A673 (cell line): ENCODE measurements at regions of chr22 and their contacts with region 1.

Region 1: GRCh38 chr22:46563381-46564083 is 26.1 kb upstream of the CELSR1 start:
- DNase-seq: peak; percentile 77
- H3K4me3 ChIP-seq: no peak overlapping the region
- H3K27ac ChIP-seq: no peak overlapping the region
- H3K4me1 ChIP-seq: peaks cover 4% of the 10 kb centered on the region
- H3K27me3 ChIP-seq: no peaks in the 10 kb centered on the region
- CTCF ChIP-seq: peak; percentile 84

Region 2: DNA sequence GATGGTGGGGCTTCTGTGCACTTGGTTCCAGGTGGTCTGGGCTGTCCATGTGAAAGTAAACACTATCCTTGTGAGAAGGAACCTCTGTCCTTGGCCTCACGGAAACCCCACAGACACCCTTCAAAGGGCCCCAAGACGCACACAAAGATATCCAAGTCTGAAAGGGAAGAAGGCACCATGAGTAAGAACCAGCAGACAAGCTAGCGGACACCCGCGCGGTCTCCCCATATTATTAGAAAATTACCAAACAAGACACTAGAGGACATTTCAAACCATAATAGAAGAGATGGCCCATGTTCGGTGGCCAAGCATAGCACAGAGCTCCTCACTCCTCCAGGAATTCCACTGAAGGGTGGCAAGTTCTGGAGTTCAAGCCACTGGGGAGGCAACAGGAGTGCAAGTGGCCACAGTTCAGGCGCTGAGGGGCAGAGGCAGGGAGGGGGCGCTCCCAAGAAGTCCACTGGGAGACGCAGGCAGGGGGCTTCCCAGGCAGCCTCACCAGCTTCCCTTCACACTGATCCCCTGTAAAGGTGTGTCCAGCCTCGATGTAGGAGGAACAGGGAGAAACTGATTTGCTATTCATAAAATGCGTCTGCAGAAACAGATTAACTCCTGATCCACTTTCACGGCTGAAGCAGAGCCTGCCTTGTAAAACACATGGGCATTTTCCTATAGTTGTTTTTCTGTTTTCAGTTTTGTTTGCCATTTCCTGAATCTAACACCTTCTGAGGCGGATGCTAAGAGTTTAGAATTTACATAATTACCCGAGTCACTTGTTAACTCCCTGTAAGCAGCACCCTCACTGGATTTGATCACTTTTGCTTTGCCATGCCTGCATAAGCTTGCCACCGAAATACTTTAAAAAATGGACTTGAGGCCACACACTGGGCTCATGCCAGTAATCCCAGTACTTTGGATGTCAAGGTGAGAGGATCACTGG is 422.3 kb before region 1 on chr22:
- CTCF ChIA-PET with region 1: interaction called, 10 read pairs
- POLR2A ChIA-PET with region 1: no interaction called
- intact Hi-C with region 1: no loop called
- DNase-seq: no peak
- H3K4me3 ChIP-seq: no peak overlapping the region
- H3K27ac ChIP-seq: no peak overlapping the region
- H3K4me1 ChIP-seq: no peaks in the 10 kb centered on the region
- H3K27me3 ChIP-seq: no peaks in the 10 kb centered on the region
- CTCF ChIP-seq: no peak

Region 3: GRCh38 chr22:46551321-46551720 is 12.2 kb before region 1 on chr22:
- CTCF ChIA-PET with region 1: interaction called, 11 read pairs
- POLR2A ChIA-PET with region 1: no interaction called
- intact Hi-C with region 1: no loop called
- DNase-seq: no peak
- H3K4me3 ChIP-seq: no peak overlapping the region
- H3K27ac ChIP-seq: no peak overlapping the region
- H3K4me1 ChIP-seq: no peaks in the 10 kb centered on the region
- H3K27me3 ChIP-seq: no peaks in the 10 kb centered on the region
- CTCF ChIP-seq: no peak

Region 4: DNA sequence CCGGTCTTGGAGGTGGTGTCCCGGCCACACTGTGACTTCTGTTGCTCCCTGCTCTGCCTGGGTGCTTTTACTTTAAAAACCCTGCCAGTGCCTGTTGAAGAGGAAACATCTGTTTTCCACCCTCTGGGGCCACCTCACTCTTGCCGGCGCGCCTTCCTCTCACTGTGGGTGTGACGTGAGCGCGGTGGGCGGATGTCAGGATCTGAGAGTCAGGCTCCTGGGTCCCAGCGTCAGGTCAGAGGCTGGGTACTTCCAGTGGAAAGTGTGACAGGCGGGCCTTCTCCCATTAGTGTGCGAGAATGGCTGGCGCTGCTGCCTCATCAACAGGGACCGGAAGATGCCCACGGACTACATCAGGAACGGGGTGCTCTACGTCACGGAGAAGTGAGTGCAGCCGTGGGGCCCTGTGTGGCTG is 110.8 kb after region 1 on chr22:
- CTCF ChIA-PET with region 1: interaction called, 8 read pairs
- POLR2A ChIA-PET with region 1: no interaction called
- intact Hi-C with region 1: loop called (anchors 10 kb)
- DNase-seq: no peak
- H3K4me3 ChIP-seq: no peak overlapping the region
- H3K27ac ChIP-seq: no peak overlapping the region
- H3K4me1 ChIP-seq: peaks cover 8% of the 10 kb centered on the region
- H3K27me3 ChIP-seq: no peaks in the 10 kb centered on the region
- CTCF ChIP-seq: no peak

Region 5: DNA sequence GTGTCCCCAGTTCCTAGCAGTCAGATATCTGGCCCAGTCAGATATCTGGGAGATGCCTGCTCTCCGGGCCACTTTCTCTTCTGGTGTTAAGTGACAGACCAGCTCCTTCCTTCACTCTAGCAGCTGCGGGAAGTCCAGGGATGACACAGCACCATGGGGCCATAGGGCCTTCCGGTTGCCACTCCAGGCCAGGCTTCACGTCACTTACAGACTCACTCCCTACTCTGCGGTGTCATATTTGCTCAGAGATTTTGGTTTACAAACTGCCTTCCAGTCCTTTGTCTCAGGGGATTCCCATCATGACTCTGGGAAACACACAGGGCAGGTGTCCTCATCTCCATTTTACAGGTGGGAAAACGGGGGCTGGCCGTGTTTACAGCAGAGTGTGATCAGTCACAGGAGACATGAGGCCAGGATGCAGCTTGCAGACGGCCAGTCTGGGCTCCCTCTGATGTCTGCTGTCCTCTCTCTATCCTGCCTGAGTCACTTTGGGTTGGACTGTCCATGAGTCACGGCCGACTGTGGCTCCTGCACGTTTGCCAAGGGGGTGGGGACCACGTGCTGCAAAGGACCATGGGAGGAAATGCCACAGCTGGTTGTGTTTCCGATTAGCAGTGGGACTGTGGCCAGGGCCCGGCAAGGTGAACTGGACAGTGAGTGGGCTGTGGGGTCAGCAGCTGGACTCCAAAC is 190.7 kb after region 1 on chr22:
- CTCF ChIA-PET with region 1: no interaction called
- POLR2A ChIA-PET with region 1: no interaction called
- intact Hi-C with region 1: no loop called
- DNase-seq: peak; percentile 84
- H3K4me3 ChIP-seq: no peak overlapping the region
- H3K27ac ChIP-seq: peak overlapping the region; percentile 62
- H3K4me1 ChIP-seq: peaks cover 7% of the 10 kb centered on the region
- H3K27me3 ChIP-seq: no peaks in the 10 kb centered on the region
- CTCF ChIP-seq: no peak

Region 6: DNA sequence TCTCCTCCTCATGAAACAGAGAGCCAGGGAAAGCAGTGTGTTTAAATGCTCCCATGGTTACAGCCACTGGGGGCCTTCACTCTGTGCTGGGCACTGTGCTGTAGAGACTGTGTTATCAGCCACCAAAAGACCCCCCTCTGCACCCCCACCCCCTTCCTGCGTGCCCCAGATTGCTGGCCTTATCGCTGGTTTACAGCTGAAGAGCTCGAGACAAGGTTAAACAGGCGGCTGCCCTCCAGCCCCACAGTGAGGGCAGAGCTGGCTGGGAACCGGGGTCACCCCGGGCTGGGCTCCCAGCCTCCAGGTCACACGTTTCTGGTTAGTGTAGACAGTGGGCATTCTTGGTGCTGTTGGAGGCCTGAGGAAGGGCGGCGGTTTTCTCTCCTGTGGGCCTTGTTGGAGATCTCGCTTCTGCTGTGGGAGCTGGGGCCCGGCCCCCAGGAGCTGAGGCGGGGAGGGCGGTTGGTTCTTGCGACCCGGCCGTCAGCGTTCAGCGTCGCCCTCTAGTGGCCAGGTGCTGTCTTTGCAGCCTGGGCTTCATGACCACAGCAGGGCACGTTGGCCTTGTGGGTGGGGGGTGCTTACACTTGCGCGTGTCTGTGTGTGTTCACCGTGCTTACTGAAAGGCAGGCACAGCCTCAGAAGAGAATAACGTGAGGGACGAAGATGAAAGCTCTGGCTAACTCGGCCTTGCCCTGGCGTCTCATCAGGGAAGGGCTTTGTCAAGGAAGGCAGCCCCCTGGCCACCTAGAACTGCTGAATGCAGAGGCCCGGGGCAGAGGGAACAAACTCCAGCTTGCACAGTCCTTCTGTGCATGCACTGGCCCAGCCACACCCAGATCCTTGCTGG is 239.7 kb after region 1 on chr22:
- CTCF ChIA-PET with region 1: interaction called, 6 read pairs
- POLR2A ChIA-PET with region 1: no interaction called
- intact Hi-C with region 1: loop called (anchors 10 kb)
- DNase-seq: peak; percentile 49
- H3K4me3 ChIP-seq: no peak overlapping the region
- H3K27ac ChIP-seq: no peak overlapping the region
- H3K4me1 ChIP-seq: no peaks in the 10 kb centered on the region
- H3K27me3 ChIP-seq: no peaks in the 10 kb centered on the region
- CTCF ChIP-seq: peak; percentile 97

Region 7: DNA sequence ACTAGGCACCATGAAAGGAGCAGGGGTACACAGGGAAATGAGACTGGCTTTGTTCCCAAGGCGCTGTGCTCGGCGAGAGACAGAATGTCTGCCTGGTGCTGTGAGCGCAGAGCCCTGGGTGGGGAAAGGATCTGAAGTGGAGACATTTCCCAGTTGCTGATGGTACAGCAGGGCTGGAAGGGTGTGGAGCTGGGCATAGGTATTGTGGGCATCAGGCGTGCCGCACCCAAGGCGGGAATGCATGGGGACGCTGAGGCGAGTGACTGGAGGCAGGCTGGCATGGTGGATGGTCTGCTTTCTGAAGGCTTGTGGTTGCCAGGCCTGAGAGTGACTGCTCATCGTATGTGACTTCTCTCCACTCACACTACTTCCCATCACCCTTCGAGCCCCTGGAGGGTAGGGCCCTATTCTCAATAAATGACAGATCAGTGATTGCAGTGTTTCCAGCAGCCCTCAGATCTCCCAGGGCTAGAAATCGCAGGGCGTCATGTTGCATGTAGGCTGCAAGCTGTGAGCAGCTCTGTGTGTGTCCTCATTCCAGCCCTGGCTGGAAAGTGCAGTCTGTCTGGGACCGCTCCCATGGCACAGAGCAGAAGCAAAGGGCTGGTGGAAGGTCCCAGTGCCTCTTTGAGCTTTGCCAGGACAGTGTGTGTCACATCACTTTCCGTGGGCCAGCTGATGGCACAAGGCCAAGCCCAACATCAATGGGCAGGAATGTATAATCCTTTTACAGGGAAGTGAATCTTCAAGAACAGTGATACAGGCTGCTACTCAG is 266.6 kb after region 1 on chr22:
- CTCF ChIA-PET with region 1: interaction called, 10 read pairs
- POLR2A ChIA-PET with region 1: no interaction called
- intact Hi-C with region 1: no loop called
- DNase-seq: peak; percentile 85
- H3K4me3 ChIP-seq: peak overlapping the region; percentile 13
- H3K27ac ChIP-seq: peak overlapping the region; percentile 66
- H3K4me1 ChIP-seq: peaks cover 32% of the 10 kb centered on the region
- H3K27me3 ChIP-seq: no peaks in the 10 kb centered on the region
- CTCF ChIP-seq: no peak

Region 8: GRCh38 chr22:48416586-48417224 is 1853.2 kb after region 1 on chr22:
- CTCF ChIA-PET with region 1: no interaction called
- POLR2A ChIA-PET with region 1: no interaction called
- intact Hi-C with region 1: no loop called
- DNase-seq: no peak
- H3K4me3 ChIP-seq: no peak overlapping the region
- H3K27ac ChIP-seq: no peak overlapping the region
- H3K4me1 ChIP-seq: no peaks in the 10 kb centered on the region
- H3K27me3 ChIP-seq: no peaks in the 10 kb centered on the region
- CTCF ChIP-seq: no peak